ENCODE measurements at regions of chr13 and their contacts with region 1.

Region 1: DNA sequence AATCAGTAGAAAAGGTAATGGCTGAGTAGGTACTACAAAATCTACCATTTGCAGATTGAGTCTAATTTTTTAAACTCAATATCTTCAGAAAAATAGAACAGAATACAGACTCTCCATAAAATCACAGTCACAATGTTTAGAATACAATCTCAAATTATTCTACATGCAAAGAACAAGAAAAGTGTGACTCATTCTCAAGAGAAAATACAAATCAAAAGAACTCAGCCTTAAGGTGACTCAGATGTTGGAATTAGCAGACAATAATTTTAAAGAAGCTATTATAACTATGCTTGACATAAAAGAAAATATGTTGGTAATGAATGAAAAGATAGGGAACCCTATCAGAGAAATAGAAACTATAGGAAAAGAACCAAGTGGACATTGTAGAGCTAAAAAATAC is 78.9 kb downstream of the RXFP2 start:
- DNase-seq: no peak
- H3K4me3 ChIP-seq: no peak overlapping the region
- H3K27ac ChIP-seq: no peak overlapping the region
- H3K4me1 ChIP-seq: no peaks in the 10 kb centered on the region
- H3K27me3 ChIP-seq: no peaks in the 10 kb centered on the region
- CTCF ChIP-seq: no peak

Region 2: GRCh38 chr13:31870511-31870910 is 52.3 kb after region 1 on chr13:
- CTCF ChIA-PET with region 1: no interaction called
- POLR2A ChIA-PET with region 1: no interaction called
- intact Hi-C with region 1: loop called (anchors 10 kb)
- DNase-seq: no peak
- H3K4me3 ChIP-seq: no peak overlapping the region
- H3K27ac ChIP-seq: no peak overlapping the region
- H3K4me1 ChIP-seq: no peaks in the 10 kb centered on the region
- H3K27me3 ChIP-seq: no peaks in the 10 kb centered on the region
- CTCF ChIP-seq: no peak